ENCODE measurements at regions of chr7 and their contacts with region 1.

Region 1: DNA sequence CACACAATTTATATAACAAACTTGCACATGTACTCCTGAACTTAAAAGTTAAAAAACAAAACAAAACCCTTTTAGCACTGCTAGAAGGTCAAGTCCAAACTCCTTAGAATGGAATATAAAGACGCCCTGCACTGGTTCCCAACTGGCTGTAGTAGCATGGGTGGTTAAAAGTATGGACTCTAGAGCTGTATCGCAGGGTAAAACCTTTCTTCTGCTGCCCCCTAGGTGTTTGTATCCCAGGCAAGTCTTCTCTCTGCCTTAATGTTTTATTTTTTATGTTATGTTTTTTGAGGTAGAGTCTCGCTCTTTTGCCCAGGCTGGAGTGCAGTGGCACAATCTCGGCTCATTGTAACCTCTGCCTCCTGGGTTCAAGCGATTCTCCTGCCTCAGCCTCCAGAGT is 35.2 kb downstream of the LSMEM1 start:
- DNase-seq: no peak
- H3K4me3 ChIP-seq: no peak overlapping the region
- H3K27ac ChIP-seq: no peak overlapping the region
- H3K4me1 ChIP-seq: no peaks in the 10 kb centered on the region
- H3K27me3 ChIP-seq: peaks cover 41% of the 10 kb centered on the region
- CTCF ChIP-seq: no peak

Region 2: DNA sequence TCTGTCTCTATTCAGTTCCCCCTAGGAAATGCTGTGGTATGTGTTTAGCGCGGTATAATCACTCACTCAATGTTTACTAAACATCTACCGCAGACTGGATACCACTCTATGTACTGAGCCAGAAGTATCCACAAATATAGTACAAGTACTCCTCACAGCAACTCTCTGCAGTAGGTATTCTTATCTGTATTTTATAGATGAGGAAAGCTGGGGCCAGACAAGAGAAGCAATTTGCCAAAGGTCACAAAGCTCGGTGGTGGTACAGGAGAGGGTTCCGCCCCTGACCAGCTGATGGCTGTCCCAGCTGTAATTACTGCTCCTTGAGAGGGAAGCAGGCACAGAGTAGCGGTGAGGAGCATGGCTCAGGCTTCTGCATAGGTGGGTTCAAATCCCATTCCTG is 493.9 kb before region 1 on chr7:
- CTCF ChIA-PET with region 1: no interaction called
- POLR2A ChIA-PET with region 1: no interaction called
- intact Hi-C with region 1: no loop called
- DNase-seq: no peak
- H3K4me3 ChIP-seq: no peak overlapping the region
- H3K27ac ChIP-seq: no peak overlapping the region
- H3K4me1 ChIP-seq: peaks cover 4% of the 10 kb centered on the region
- H3K27me3 ChIP-seq: no peaks in the 10 kb centered on the region
- CTCF ChIP-seq: no peak

Region 3: DNA sequence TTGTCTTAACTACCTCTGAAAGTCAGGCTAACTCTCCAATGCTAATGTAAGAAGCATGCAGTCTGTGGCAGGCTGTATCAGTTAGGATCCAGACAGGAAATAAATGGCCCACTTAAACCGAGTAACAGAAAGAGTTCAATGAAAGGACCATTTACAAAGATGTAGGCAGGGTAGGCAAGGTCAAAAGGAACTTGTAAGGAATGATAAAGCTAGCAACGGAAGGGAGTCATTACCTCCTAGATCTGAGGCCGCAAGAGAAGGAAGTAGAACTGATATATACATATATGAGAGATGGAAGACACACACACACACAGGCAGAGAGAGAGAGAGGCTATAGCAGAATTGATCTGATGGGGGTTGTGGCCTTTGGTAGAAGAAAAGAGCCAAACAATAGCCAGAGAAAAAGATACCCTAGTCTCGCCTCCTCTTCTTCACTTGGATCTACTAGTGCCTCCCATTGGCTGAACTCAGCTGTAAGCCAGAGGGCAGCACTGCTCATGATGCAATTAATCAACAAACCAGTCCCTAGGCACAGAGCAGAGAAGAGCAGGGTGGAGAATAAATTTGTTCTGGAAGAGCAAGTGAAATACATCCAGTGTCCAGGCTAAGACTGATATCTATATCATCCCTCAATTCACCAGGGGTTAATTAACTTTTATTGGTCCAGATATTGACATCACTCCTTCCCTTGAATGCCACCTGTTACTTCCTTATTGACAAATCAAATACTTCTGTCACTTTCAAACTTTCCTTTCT is 56.0 kb after region 1 on chr7:
- CTCF ChIA-PET with region 1: no interaction called
- POLR2A ChIA-PET with region 1: no interaction called
- intact Hi-C with region 1: no loop called
- DNase-seq: no peak
- H3K4me3 ChIP-seq: no peak overlapping the region
- H3K27ac ChIP-seq: no peak overlapping the region
- H3K4me1 ChIP-seq: peaks cover 8% of the 10 kb centered on the region
- H3K27me3 ChIP-seq: no peaks in the 10 kb centered on the region
- CTCF ChIP-seq: peak; percentile 45

Region 4: GRCh38 chr7:112594397-112594796 is 78.4 kb after region 1 on chr7:
- CTCF ChIA-PET with region 1: no interaction called
- POLR2A ChIA-PET with region 1: no interaction called
- intact Hi-C with region 1: loop called (anchors 2 kb)
- DNase-seq: peak; percentile 82
- H3K4me3 ChIP-seq: no peak overlapping the region
- H3K27ac ChIP-seq: no peak overlapping the region
- H3K4me1 ChIP-seq: peaks cover 26% of the 10 kb centered on the region
- H3K27me3 ChIP-seq: no peaks in the 10 kb centered on the region
- CTCF ChIP-seq: no peak

Region 5: DNA sequence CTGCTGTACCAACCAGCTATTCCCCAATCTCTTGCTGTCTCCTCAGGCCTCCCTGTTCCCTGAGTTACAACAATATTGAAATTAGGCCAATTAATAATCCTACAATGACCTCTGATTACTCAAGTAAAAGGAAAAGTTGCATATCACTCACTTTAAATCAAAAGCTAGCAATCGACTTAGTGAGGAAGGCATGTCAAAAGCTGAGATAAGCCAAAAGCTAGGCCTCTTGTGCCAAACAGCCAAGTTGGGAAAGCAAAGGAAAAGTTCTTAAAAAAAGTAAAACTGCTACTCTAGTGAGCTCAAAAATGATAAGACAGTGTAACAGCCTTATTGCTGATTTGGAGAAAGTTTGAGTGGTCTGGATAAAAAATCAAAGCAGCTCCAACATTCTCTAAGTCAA is 94.6 kb after region 1 on chr7:
- CTCF ChIA-PET with region 1: no interaction called
- POLR2A ChIA-PET with region 1: no interaction called
- intact Hi-C with region 1: no loop called
- DNase-seq: no peak
- H3K4me3 ChIP-seq: no peak overlapping the region
- H3K27ac ChIP-seq: no peak overlapping the region
- H3K4me1 ChIP-seq: no peaks in the 10 kb centered on the region
- H3K27me3 ChIP-seq: peaks cover 7% of the 10 kb centered on the region
- CTCF ChIP-seq: no peak

Region 6: GRCh38 chr7:113159746-113160339 is 643.9 kb after region 1 on chr7:
- CTCF ChIA-PET with region 1: no interaction called
- POLR2A ChIA-PET with region 1: no interaction called
- intact Hi-C with region 1: no loop called
- DNase-seq: peak; percentile 49
- H3K4me3 ChIP-seq: no peak overlapping the region
- H3K27ac ChIP-seq: no peak overlapping the region
- H3K4me1 ChIP-seq: no peaks in the 10 kb centered on the region
- H3K27me3 ChIP-seq: peaks cover 5% of the 10 kb centered on the region
- CTCF ChIP-seq: peak; percentile 73